Activated CD4-positive, alpha-beta T cell treated with anti-CD3 and anti-CD28 coated beads, Interleukin-2, amount 10 ng/mL, durations not matched to agents 24 days and 14 days (primary cell): ENCODE measurements at regions of chr12 and their contacts with region 1.

Region 1: DNA sequence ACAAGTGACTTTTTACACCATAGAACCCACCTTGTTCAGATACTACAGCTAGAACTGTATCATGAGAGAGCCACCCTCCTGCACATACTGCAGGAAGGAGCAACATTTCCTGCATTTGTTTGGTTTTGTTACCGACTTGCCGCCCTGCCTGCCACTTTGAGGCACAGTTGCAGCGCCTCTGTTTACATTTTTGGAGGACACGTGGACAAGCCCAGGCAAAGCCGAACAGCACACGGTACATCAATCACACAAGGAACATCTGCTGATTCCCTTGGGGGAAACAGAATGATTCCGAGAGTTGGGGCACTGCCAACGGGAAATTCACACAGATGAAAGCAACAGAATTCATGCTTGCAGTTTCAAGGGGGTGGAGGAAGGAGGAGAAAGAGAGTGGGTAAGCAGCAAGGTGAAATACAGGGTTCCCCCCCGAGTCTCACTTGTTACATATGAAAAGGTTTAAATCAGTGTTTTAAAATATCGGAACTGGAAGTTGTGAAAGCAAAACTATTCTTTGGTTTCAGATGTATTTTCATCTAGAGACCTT is 110.7 kb downstream of the BTG1 start:
- DNase-seq: peak; percentile 83
- H3K4me3 Mint-ChIP-seq: peak overlapping the region; percentile 88
- H3K27ac Mint-ChIP-seq: peak overlapping the region; percentile 84
- H3K4me1 Mint-ChIP-seq: peaks cover 64% of the 10 kb centered on the region
- H3K27me3 Mint-ChIP-seq: no peaks in the 10 kb centered on the region

Region 2: GRCh38 chr12:91998316-91998715 is 36.6 kb before region 1 on chr12:
- intact Hi-C with region 1: loop called (anchors 5 kb)
- DNase-seq: no peak
- H3K4me3 Mint-ChIP-seq: no peak overlapping the region
- H3K27ac Mint-ChIP-seq: no peak overlapping the region
- H3K4me1 Mint-ChIP-seq: peaks cover 16% of the 10 kb centered on the region
- H3K27me3 Mint-ChIP-seq: no peaks in the 10 kb centered on the region

Region 3: DNA sequence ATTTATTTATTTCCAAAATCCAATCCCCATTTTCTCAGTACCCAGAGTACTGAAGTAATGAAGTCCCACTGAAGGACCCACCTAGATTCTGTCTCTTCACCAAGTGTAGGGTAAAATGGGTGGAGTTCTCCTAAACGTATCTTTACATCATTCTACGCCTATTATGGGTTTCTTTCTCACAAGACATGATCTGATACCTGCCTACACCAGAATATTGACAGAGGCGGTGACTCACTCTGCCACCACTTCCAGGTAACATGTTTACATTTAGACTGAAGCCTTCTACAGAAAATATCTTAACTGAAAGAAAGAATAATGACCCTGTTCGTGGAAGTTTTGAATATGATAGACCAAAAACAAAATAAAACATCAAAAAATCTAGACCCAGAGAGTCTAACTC is 20.9 kb after region 1 on chr12:
- intact Hi-C with region 1: loop called (anchors 2 kb)
- DNase-seq: peak; percentile 85
- H3K4me3 Mint-ChIP-seq: peak overlapping the region; percentile 55
- H3K27ac Mint-ChIP-seq: peak overlapping the region; percentile 74
- H3K4me1 Mint-ChIP-seq: peaks cover 64% of the 10 kb centered on the region
- H3K27me3 Mint-ChIP-seq: no peaks in the 10 kb centered on the region

Region 4: DNA sequence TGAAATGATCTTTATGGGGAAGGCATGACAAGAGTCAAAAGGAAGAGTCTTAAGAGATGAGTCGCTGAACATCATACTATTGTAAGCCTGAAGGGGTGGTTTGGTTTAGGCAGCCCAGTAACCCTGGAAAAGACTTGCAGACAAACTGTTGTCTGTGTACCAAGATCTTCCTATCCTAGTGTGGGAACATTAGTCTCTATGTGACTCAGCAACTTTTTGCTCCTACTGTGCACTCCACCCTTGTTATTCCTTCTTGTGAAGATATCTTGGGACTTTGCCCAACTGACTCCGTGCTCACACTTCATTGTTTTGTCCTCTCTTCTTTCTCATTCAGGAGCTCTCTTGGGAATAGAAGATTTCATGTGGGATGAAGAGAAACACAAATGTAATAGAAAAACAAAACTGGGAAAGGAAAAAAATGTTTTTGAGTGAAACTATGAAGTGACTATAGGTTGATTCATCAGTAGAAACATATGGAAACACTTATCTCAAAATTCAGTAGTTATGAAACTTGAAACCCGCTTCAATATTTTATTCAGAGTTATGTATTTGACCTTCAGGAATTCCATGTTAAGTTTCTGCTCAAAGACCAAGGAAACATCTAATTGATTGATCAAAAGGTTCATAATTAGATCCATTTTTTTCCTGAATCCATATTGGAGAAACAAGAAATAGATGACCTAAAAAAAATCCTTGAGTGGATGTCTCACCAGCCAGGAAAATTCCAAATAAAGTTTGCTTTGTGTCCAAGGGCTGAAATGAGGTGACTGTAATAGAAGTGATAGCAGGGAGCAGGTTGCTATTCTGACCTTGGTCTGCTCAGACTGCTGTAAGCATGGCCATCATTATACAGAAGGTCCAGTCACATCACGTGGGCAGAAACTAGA is 43.5 kb after region 1 on chr12:
- intact Hi-C with region 1: loop called (anchors 2 kb)
- DNase-seq: no peak
- H3K4me3 Mint-ChIP-seq: peak overlapping the region; percentile 7
- H3K27ac Mint-ChIP-seq: peak overlapping the region; percentile 82
- H3K4me1 Mint-ChIP-seq: peaks cover 43% of the 10 kb centered on the region
- H3K27me3 Mint-ChIP-seq: no peaks in the 10 kb centered on the region